Activated CD4-positive, alpha-beta T cell treated with anti-CD3 and anti-CD28 coated beads, Interleukin-2, amount 10 ng/mL, durations not matched to agents 24 days and 14 days (primary cell): ENCODE measurements at regions of chr10 and their contacts with region 1.

Region 1: DNA sequence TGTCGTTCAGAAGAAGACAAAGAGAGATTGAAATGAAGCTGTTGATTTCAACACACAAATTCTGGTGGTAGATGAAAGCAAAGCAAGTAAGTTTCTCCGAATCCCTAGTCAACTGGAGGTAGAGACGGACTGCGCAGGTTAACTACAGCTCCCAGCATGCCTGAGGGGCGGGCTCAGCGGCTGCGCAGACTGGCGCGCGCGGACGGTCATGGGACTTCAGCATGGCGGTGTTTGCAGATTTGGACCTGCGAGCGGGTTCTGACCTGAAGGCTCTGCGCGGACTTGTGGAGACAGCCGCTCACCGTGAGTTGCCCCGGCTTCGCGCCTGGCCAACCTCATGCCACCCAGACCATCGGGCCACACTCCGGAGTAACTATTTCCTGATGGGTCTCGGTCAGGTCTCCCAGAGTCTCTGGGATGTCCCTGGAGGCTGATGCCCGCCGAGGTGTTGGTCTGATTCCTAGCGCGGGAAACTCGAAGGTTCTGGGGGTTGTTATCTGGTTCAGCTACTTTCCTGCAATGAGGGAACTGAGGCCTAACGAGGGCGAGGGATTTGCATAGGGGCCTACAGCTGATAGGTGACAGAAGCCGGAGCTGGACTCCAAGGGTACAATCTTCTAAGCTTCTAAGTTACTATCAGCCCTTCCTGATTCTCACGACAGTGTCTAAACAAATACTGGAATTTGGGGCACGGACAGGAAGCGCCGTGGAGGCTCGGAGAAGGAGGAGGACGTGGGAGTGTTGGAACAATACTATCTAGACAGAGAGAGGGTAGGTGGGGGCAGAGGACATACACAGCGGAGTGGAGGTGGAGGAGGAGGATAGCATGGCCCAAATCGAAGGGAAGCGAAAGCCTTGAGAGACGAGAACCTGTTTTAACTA is at the start of gene RPP30:
- DNase-seq: peak; percentile 96
- H3K4me3 Mint-ChIP-seq: peak within 1 kb of the TSS; percentile 97
- H3K27ac Mint-ChIP-seq: peak within 1 kb of the TSS; percentile 96
- H3K4me1 Mint-ChIP-seq: peaks cover 32% of the 10 kb centered on the region
- H3K27me3 Mint-ChIP-seq: peaks cover 25% of the 10 kb centered on the region
- total RNA-seq, gene RPP30: 86.4 and 86.9 TPM in 2 replicates

Region 2: DNA sequence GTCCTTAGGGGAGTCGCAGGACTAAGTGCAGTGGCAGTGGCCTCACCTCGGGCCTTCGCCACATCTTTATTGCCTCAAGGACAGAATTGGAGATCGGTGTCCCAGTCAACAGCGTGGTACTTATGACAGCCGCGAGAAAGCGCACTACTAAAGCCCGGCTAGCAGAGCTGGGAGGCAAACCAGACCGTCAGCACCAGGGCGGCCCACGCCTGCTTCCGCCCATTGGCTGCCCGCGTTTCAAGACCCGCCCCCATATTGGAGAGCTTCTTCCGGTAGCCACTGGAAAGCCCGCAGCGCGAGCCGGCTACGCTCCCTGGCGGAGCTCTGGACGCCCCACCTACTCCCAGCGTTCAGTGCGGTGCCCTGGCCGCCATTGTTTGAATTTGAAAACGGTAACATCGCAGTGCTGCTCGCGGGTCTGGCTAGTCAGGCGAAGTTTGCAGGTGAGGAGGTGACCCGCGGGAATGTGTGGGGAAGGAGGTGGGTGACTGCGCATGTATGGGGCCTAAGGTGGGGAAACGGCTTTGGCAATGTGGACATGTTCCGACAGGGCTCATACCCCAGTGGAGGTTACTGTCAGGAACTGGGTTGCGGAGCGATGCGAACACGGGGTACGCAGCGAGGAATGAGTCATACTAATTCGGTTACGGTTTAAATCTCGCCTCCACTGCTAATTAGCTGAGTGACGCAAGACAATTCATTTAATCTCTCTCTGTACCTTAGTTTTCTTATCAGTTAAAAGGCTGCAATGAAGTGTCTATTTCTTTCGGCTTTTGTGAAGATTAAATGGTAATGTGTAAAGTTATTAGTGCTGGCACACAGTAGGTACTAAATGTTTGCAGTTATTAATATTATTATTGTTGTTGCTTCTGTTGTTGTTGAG is 1170.5 kb before region 1 on chr10 and contains the start of gene KIF20B:
- intact Hi-C with region 1: loop called (anchors 1 kb)
- DNase-seq: peak; percentile 99
- H3K4me3 Mint-ChIP-seq: peak within 1 kb of the TSS; percentile 95
- H3K27ac Mint-ChIP-seq: peak within 1 kb of the TSS; percentile 98
- H3K4me1 Mint-ChIP-seq: peaks cover 42% of the 10 kb centered on the region
- H3K27me3 Mint-ChIP-seq: no peaks in the 10 kb centered on the region
- total RNA-seq, gene KIF20B: 55.0 and 55.6 TPM in 2 replicates

Region 3: GRCh38 chr10:89805599-89806013 is 1066.4 kb before region 1 on chr10:
- intact Hi-C with region 1: loop called (anchors 1 kb)
- DNase-seq: peak; percentile 65
- H3K4me3 Mint-ChIP-seq: no peak overlapping the region
- H3K27ac Mint-ChIP-seq: peak overlapping the region; percentile 27
- H3K4me1 Mint-ChIP-seq: peaks cover 21% of the 10 kb centered on the region
- H3K27me3 Mint-ChIP-seq: peaks cover 22% of the 10 kb centered on the region

Region 4: GRCh38 chr10:90741926-90742565 is 130.0 kb before region 1 on chr10:
- intact Hi-C with region 1: no loop called
- DNase-seq: no peak
- H3K4me3 Mint-ChIP-seq: no peak overlapping the region
- H3K27ac Mint-ChIP-seq: no peak overlapping the region
- H3K4me1 Mint-ChIP-seq: no peaks in the 10 kb centered on the region
- H3K27me3 Mint-ChIP-seq: peaks cover 10% of the 10 kb centered on the region

Region 5: DNA sequence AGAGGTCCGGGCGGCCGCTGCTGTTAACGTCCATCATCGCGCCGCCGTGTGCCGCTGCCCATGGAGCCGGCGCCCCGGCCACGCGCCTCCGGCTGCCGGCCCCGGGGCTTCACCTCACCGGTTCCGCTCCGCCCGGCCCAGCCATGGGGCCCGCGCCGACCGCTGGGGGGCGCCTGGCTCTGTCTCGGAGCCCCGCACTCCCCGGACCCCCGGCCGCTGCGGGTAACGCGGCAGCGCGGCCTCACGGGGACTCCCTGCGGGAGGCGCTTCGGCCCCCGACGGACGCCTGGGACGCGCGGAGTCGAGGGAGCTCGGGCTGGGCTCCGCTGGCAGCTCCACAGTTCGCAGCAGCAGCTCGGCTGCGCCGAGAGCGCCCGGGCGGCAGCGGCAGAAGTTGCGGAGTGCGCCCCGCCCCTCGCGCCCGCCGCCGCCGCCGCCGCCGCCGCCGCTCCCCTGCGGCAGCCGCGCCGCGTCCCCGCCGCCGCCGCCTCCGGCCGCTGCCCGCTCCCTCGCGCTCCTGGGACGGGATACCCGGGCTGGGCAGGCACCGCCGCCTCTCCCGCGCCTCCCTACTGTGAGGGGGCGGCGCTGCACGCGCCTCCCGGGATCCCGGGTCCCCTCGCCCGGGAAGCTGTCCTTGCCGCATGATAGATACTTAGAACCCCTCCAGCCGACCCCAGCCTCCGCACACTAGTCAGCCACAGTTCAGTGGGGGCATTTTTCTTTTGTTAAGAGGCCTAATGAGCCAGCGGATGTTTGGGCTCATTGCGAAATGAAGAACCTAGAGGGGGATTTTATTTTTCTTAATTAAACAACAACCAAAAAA is 14.2 kb before region 1 on chr10 and contains the start of gene HTR7:
- intact Hi-C with region 1: loop called (anchors 1 kb)
- DNase-seq: peak; percentile 89
- H3K4me3 Mint-ChIP-seq: peak within 1 kb of the TSS; percentile 88
- H3K27ac Mint-ChIP-seq: peak within 1 kb of the TSS; percentile 68
- H3K4me1 Mint-ChIP-seq: peaks cover 4% of the 10 kb centered on the region
- H3K27me3 Mint-ChIP-seq: peaks cover 78% of the 10 kb centered on the region
- total RNA-seq, gene HTR7: not detected in 2 replicates